ENCODE measurements at regions of chr15 and their contacts with region 1.

Region 1: DNA sequence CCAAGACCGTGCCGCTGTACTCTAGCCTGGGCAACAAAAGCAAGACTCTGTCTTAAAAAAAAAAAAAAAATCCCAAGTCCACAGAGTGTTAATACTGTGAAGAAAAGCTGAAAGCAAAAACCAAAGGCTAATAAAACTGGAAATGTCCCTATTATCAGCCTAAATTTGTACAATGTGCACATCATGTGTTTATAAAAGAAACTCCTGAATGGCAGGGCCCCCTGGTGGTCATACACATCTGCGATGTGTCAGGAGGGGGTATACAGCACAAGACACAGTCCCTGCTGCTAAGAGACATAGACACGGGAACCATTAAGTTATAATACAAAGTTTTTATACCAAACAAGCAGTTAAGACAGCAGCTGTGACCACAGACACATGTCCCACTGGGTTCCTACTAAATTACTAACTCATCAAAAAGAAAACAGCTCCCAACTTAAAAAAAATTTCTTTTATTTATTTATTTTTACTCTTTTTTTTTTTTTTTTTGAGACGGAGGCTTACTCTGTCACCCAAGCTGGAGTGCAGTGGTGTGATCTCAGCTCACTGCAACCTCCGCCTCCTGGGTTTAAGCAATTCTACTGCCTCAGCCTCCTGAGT is 31.0 kb downstream of the IDH2 start:
- DNase-seq: peak; percentile 63
- H3K4me3 Mint-ChIP-seq: no peak overlapping the region
- H3K27ac Mint-ChIP-seq: peak overlapping the region; percentile 70
- H3K4me1 Mint-ChIP-seq: no peaks in the 10 kb centered on the region
- H3K27me3 Mint-ChIP-seq: no peaks in the 10 kb centered on the region

Region 2: DNA sequence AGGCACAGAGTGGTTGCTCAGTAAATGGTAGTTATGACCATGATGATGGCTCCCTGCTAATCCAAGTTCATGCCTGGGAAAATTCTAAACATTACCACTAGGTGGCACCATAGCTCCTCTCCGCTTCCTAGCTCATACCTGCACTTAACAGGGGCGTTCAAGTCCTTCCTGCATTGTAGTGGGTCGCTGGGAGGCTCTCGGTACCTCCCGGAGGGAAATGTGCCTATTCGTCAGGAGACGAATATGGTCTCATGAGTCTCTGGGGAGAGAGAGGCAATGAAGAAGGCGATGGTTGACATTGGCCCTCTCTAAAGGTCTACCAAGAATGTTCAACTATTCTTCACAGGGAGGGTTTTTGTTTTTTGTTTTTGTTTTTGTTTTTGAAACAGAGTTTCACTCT is 331.2 kb before region 1 on chr15:
- intact Hi-C with region 1: loop called (anchors 1 kb)
- DNase-seq: peak; percentile 53
- H3K4me3 Mint-ChIP-seq: no peak overlapping the region
- H3K27ac Mint-ChIP-seq: no peak overlapping the region
- H3K4me1 Mint-ChIP-seq: no peaks in the 10 kb centered on the region
- H3K27me3 Mint-ChIP-seq: peaks cover 14% of the 10 kb centered on the region

Region 3: GRCh38 chr15:89760303-89761008 is 310.9 kb before region 1 on chr15:
- intact Hi-C with region 1: loop called (anchors 1 kb)
- DNase-seq: peak; percentile 53
- H3K4me3 Mint-ChIP-seq: no peak overlapping the region
- H3K27ac Mint-ChIP-seq: no peak overlapping the region
- H3K4me1 Mint-ChIP-seq: no peaks in the 10 kb centered on the region
- H3K27me3 Mint-ChIP-seq: peaks cover 13% of the 10 kb centered on the region

Region 4: DNA sequence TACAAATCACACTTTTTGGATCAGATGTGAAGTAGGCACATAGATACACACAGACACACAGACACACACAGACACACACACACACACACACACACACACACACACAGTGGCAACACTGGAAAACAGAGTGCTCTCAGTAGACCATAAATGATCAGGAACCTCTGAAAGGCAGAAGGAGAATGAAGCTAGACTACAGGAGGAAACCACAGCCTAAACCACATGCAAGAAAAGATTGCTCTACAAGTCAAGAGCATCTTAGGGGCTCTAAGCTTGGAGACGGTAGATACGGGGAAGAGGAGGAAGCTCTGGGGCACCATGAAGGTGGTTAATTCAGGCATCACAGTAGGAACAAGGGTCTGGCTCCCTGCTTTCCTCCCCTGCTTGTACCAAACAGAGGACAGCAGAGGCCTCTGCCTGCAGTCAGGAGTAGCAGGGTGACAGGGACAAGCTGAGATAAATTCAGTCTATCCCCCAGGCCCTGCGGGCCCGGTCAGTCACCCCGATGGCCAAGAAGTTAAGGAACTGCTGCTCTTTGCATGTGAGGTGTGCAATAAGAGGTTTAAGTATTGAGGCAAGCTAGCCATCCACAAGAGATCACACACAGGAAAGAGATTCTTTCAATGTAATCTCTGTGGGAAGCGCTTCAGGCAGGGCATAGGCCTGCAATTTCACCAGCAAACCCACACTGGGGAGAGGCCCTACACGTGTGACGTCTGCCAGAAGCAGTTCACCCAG is 135.1 kb before region 1 on chr15:
- intact Hi-C with region 1: loop called (anchors 5 kb)
- DNase-seq: peak; percentile 12
- H3K4me3 Mint-ChIP-seq: peak overlapping the region; percentile 1
- H3K27ac Mint-ChIP-seq: no peak overlapping the region
- H3K4me1 Mint-ChIP-seq: peaks cover 25% of the 10 kb centered on the region
- H3K27me3 Mint-ChIP-seq: peaks cover 36% of the 10 kb centered on the region

Region 5: GRCh38 chr15:90059208-90059985 is 11.9 kb before region 1 on chr15:
- intact Hi-C with region 1: loop called (anchors 1 kb)
- DNase-seq: peak; percentile 69
- H3K4me3 Mint-ChIP-seq: peak overlapping the region; percentile 35
- H3K27ac Mint-ChIP-seq: peak overlapping the region; percentile 85
- H3K4me1 Mint-ChIP-seq: peaks cover 25% of the 10 kb centered on the region
- H3K27me3 Mint-ChIP-seq: no peaks in the 10 kb centered on the region

Measured in activated T-helper 1 cell treated with anti-CD3 and anti-CD28 coated beads, Interleukin-12 subunit alpha, Interleukin-12 subunit beta, Interleukin-2, Interleukin-4 antibody, amounts not matched to agents 30 ng/mL and 10 ng/mL and 1 ng/mL, durations not matched to agents 14 hours and 24 hours and 36 hours (primary cell).